ENCODE measurements at regions of chr6 and their contacts with region 1.

Region 1: GRCh38 chr6:94623586-94623985 is 953.7 kb upstream of the MANEA start:
- DNase-seq: no peak

Region 2: GRCh38 chr6:93389192-93389591 is 1234.4 kb before region 1 on chr6:
- intact Hi-C with region 1: loop called in 1 of 2 experiments (anchors 10 kb)
- DNase-seq: no peak

Measured in posterior vena cava (tissue), 2 donors.